Ascending aorta (tissue), 2 donors: ENCODE measurements at regions of chr22 and their contacts with region 1.

Region 1: GRCh38 chr22:49917974-49918910 is at the starts of genes ALG12 and CRELD2:
- DNase-seq: peak; percentile 94 to 99
- H3K4me3 ChIP-seq: peak within 1 kb of the TSS; percentile 76 to 90
- H3K27ac ChIP-seq: peak within 1 kb of the TSS; percentile 95
- H3K4me1 ChIP-seq: peaks cover 0 to 12% of the 10 kb centered on the region in 2 donors
- H3K27me3 ChIP-seq: no peaks in the 10 kb centered on the region
- CTCF ChIP-seq: no peak
- total RNA-seq, gene ALG12: 6.9 TPM
- total RNA-seq, gene CRELD2: 61.8 TPM

Region 2: DNA sequence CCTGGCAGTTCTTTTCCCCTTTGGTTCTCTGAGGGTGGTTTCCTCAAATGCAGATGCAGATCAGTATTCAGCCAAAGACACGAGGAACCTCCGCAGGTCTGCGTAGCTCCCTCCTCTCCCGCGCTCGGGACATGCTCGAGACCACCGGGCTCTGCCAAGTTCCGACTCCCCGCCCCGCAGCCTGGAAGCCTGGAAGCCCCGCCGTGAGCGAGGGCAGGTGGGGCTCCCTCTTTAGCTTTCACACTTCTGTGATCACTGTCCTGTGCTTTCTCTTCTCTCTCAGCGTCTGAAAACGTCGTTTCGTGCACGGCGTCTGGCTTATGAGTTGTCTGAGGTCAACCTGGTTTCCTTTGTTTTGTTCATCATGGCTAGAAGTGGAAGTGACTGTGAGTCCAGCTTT is 38.0 kb before region 1 on chr22:
- intact Hi-C with region 1: no loop called
- DNase-seq: no peak
- H3K4me3 ChIP-seq: no peak overlapping the region
- H3K27ac ChIP-seq: no peak overlapping the region
- H3K4me1 ChIP-seq: no peaks in the 10 kb centered on the region
- H3K27me3 ChIP-seq: no peaks in the 10 kb centered on the region
- CTCF ChIP-seq: no peak

Region 3: DNA sequence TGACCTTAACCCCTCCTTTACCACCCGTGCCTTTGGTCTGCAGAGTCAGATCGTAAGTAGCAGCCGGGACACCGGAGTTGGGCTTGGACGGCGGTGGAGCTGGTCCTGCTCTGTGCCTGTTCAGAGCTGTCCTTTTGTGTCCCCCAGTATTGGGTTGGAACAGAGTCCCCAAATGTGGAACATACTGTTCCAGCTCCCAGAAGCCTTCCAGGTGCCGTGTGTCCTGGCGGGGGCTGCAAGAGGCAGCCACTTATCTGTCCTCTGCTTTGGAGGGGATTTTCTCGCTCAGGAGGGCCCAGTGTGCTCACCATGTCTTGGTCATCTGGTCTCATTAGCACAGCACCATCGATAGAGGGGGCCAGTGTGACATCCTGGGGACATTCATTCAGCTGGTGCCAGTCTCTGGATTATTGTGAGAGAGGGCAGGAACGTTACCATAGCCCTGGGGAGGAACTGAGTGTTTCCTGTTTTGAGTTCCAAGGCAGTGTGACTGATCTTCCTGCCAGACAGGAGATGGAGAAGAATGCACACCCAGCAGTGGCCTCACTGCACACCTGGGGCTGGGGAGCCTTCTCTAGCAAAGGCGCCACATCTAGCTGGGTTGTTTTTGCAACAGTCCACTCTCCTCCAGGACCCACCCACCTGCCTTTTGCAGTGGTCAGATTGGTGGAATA is 12.6 kb after region 1 on chr22:
- intact Hi-C with region 1: loop called (anchors 1 kb)
- DNase-seq: peak; percentile 51 to 89
- H3K4me3 ChIP-seq: no peak overlapping the region
- H3K27ac ChIP-seq: no peak overlapping the region
- H3K4me1 ChIP-seq: peaks cover 8 to 27% of the 10 kb centered on the region in 2 donors
- H3K27me3 ChIP-seq: no peaks in the 10 kb centered on the region
- CTCF ChIP-seq: peak; percentile 55 to 72 (median 57)

Region 4: GRCh38 chr22:49960159-49961004 is 42.1 kb after region 1 on chr22 and contains the start of gene PIM3:
- intact Hi-C with region 1: loop called (anchors 1 kb)
- DNase-seq: peak; percentile 79 to 96
- H3K4me3 ChIP-seq: peak within 1 kb of the TSS; percentile 85 to 89
- H3K27ac ChIP-seq: peak within 1 kb of the TSS; percentile 88 to 96
- H3K4me1 ChIP-seq: peaks cover 0 to 18% of the 10 kb centered on the region in 2 donors
- H3K27me3 ChIP-seq: no peaks in the 10 kb centered on the region
- CTCF ChIP-seq: peak in 1 of 3 experiments; percentile 33
- total RNA-seq, gene PIM3: 269 TPM

Region 5: GRCh38 chr22:49979587-49980264 is 61.5 kb after region 1 on chr22:
- intact Hi-C with region 1: no loop called
- DNase-seq: no peak
- H3K4me3 ChIP-seq: no peak overlapping the region
- H3K27ac ChIP-seq: no peak overlapping the region
- H3K4me1 ChIP-seq: no peaks in the 10 kb centered on the region
- H3K27me3 ChIP-seq: peaks cover 11% of the 10 kb centered on the region
- CTCF ChIP-seq: peak in 1 of 3 experiments; percentile 33

Region 6: GRCh38 chr22:50185384-50186087 is 267.3 kb after region 1 on chr22 and contains the start of gene TRABD:
- intact Hi-C with region 1: loop called (anchors 5 kb)
- DNase-seq: peak in 1 of 2 donors; percentile 92
- H3K4me3 ChIP-seq: peak within 1 kb of the TSS; percentile 72 to 77
- H3K27ac ChIP-seq: peak within 1 kb of the TSS; percentile 42 to 67
- H3K4me1 ChIP-seq: peaks cover 5 to 33% of the 10 kb centered on the region in 2 donors
- H3K27me3 ChIP-seq: no peaks in the 10 kb centered on the region
- CTCF ChIP-seq: no peak
- total RNA-seq, gene TRABD: 91.4 TPM